Activated B cell treated with CpG ODN at 0.5 μM for 24 hours (primary cell): ENCODE measurements at regions of chr16 and their contacts with region 1.

Region 1: DNA sequence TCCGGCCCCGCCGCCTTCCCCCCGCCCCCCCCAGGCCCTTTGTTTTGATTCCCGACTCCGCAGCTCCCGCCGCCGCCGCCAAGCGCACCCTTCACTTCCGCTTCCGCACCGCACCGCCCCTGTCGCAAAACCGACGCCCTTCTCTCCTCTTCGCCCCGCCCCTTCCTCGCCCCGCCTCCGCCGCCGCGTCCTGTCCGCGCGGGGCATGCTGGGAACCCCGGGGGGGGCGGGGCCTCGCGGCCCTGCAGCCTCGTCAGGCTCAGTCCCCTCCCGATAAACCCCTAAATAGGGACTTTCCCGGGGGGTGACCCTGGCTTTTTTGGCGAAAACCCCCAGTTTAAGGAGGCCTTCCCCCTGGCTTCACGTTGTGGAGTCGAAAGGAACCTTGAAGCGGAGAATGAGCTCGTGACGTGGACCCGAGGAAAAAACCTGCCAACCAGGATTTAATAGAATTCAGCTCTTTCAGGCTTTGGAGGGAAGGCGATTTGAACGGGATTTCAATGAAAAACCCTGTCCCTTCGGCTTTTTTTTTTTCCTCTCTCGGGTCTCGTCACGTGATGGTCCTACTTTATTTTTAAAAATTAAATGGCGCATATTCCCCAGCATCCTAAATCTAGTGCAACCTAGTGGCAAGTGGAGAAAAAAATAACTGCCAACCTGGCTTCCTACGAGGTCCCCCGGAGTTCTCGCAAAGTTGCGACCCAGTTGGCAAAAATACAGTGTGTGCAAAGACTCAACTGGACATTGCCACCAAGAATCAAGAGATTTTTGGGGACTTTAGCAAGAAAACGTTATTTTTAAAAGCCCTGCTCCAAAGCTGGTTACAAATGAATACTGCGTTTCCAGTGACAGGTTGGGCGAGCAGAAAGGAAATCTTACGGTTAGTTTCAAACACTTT is at the start of gene MARF1:
- DNase-seq: peak; percentile 100
- ATAC-seq: peak; percentile 73
- H3K4me3 Mint-ChIP-seq: peak within 1 kb of the TSS; percentile 84
- H3K27ac Mint-ChIP-seq: peak within 1 kb of the TSS; percentile 98
- H3K4me1 Mint-ChIP-seq: peaks cover 75% of the 10 kb centered on the region
- H3K27me3 Mint-ChIP-seq: no peaks in the 10 kb centered on the region
- CTCF ChIP-seq: no peak
- total RNA-seq, gene MARF1: 160 and 186 TPM in 2 replicates

Region 2: GRCh38 chr16:15427648-15428239 is 215.6 kb before region 1 on chr16:
- CTCF ChIA-PET with region 1: interaction called, 16 read pairs
- POLR2A ChIA-PET with region 1: interaction called, 6 read pairs
- intact Hi-C with region 1: loop called (anchors 1 kb)
- DNase-seq: peak; percentile 22
- ATAC-seq: peak; percentile 67
- H3K4me3 Mint-ChIP-seq: no peak overlapping the region
- H3K27ac Mint-ChIP-seq: no peak overlapping the region
- H3K4me1 Mint-ChIP-seq: peaks cover 3% of the 10 kb centered on the region
- H3K27me3 Mint-ChIP-seq: peaks cover 2% of the 10 kb centered on the region
- CTCF ChIP-seq: no peak

Region 3: DNA sequence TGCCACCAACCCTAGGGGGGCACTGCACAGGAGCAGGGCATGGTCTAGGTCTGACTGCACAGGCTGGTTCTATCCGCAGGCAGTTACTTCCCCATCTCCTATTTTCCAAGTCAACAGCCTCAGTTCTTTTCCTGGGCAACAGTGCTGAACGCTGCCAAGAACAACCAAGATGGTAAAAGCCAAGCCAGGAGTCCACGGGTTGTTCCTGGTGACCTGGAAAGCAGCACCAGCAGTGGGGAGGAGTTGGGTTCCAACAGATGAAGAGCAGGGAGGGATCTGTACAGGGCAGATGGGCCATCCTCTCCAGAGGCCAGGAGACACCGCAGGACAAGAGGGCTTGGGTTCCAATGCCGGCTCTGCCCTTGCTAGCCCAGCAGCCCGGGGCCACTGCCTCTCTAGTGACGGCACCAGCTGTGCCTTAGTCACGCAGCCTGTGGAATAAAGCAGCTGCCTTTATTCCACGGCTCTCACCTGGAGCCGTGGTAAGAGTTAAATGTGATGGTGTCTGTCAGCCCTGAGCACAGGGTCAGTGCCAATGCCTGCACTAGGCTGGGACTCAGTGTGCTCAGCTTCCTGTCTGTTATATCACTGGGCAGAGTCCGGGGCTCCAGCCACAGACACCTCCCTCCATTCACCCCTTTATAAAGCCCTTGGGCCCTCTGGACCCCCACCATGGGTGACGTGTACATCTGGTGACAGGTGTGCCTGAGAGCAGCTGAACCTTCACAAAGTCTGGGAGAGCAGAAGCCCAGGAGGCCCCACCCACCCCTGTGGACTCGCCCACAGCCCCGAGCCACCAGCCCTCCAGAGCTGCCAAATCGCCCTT is 45.3 kb before region 1 on chr16:
- CTCF ChIA-PET with region 1: interaction called, 11 read pairs
- POLR2A ChIA-PET with region 1: interaction called, 142 read pairs
- intact Hi-C with region 1: no loop called
- DNase-seq: no peak
- ATAC-seq: no peak
- H3K4me3 Mint-ChIP-seq: no peak overlapping the region
- H3K27ac Mint-ChIP-seq: peak overlapping the region; percentile 60
- H3K4me1 Mint-ChIP-seq: peaks cover 27% of the 10 kb centered on the region
- H3K27me3 Mint-ChIP-seq: no peaks in the 10 kb centered on the region
- CTCF ChIP-seq: no peak

Region 4: GRCh38 chr16:15672514-15673167 is 29.3 kb after region 1 on chr16:
- CTCF ChIA-PET with region 1: no interaction called
- POLR2A ChIA-PET with region 1: interaction called, 12 read pairs
- intact Hi-C with region 1: loop called (anchors 1 kb)
- DNase-seq: no peak
- ATAC-seq: peak; percentile 81
- H3K4me3 Mint-ChIP-seq: peak overlapping the region; percentile 55
- H3K27ac Mint-ChIP-seq: peak overlapping the region; percentile 87
- H3K4me1 Mint-ChIP-seq: peaks cover 34% of the 10 kb centered on the region
- H3K27me3 Mint-ChIP-seq: no peaks in the 10 kb centered on the region
- CTCF ChIP-seq: no peak

Region 5: DNA sequence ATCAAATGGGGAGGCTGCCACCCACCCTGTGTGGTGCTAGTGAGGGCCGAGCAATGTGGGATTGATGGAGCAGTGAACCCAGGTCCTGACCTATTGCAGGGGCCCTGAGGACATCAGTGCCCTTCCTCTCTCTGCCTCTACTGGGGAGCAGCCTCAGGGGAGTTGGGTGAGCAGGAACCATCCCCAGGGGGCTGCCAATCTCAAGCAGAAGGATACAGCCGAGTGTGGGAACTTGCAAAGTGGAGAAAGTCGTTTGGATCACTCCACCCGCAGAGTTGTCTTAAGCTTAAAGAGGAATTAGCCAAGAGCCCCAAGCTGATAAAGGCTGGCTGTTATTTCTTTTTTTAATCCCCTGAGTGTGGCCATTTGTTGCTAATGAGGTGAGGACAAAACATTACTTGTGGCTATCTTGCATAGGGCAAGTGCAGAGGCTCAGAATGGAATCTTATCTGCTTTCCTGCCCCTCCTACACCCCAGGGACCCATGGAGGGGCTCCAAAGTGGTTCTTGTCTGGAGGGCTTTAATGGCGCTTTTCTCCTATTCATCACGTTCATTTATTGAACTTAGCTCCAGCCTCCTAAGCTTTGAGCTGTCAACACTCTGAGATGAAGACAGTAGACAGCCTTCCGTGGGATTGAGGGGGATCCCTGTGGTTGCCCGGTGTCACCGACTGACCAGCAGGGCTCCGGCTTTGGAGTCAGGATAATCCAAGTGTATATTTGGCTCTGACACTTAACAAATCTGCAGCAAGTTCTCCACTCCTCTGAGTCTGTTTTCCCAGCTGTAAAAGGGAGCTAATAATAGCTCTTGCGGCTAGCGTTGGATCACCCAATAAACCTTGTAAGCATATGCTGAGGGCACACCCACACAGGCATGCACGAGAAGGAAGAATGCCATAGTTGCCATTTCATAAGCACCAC is 168.4 kb after region 1 on chr16:
- CTCF ChIA-PET with region 1: no interaction called
- POLR2A ChIA-PET with region 1: no interaction called
- intact Hi-C with region 1: no loop called
- DNase-seq: no peak
- ATAC-seq: no peak
- H3K4me3 Mint-ChIP-seq: no peak overlapping the region
- H3K27ac Mint-ChIP-seq: no peak overlapping the region
- H3K4me1 Mint-ChIP-seq: no peaks in the 10 kb centered on the region
- H3K27me3 Mint-ChIP-seq: peaks cover 12% of the 10 kb centered on the region
- CTCF ChIP-seq: no peak